Ascending aorta (tissue), 2 donors: ENCODE measurements at regions of chr2 and their contacts with region 1.

Region 1: GRCh38 chr2:100984892-100985379 is 17.2 kb upstream of the RPL31 start:
- DNase-seq: peak in 1 of 2 donors; percentile 84
- H3K4me3 ChIP-seq: no peak overlapping the region
- H3K27ac ChIP-seq: peak overlapping the region; percentile 51 to 74
- H3K4me1 ChIP-seq: peaks cover 5 to 12% of the 10 kb centered on the region in 2 donors
- H3K27me3 ChIP-seq: no peaks in the 10 kb centered on the region
- CTCF ChIP-seq: peak; percentile 88 to 95 (median 90)

Region 2: GRCh38 chr2:100606726-100607343 is 378.1 kb before region 1 on chr2:
- intact Hi-C with region 1: loop called (anchors 1 kb)
- DNase-seq: peak in 1 of 2 donors; percentile 66
- H3K4me3 ChIP-seq: no peak overlapping the region
- H3K27ac ChIP-seq: no peak overlapping the region
- H3K4me1 ChIP-seq: peaks cover 5 to 10% of the 10 kb centered on the region in 2 donors
- H3K27me3 ChIP-seq: no peaks in the 10 kb centered on the region
- CTCF ChIP-seq: peak; percentile 58 to 79 (median 73)

Region 3: GRCh38 chr2:100730346-100730745 is 254.6 kb before region 1 on chr2:
- intact Hi-C with region 1: loop called (anchors 1 kb)
- DNase-seq: no peak
- H3K4me3 ChIP-seq: no peak overlapping the region
- H3K27ac ChIP-seq: no peak overlapping the region
- H3K4me1 ChIP-seq: no peaks in the 10 kb centered on the region
- H3K27me3 ChIP-seq: no peaks in the 10 kb centered on the region
- CTCF ChIP-seq: peak; percentile 43 to 63 (median 59)

Region 4: GRCh38 chr2:100882645-100883613 is 102.0 kb before region 1 on chr2:
- intact Hi-C with region 1: no loop called
- DNase-seq: no peak
- H3K4me3 ChIP-seq: no peak overlapping the region
- H3K27ac ChIP-seq: no peak overlapping the region
- H3K4me1 ChIP-seq: peaks cover 0 to 5% of the 10 kb centered on the region in 2 donors
- H3K27me3 ChIP-seq: no peaks in the 10 kb centered on the region
- CTCF ChIP-seq: no peak

Region 5: GRCh38 chr2:100957996-100958653 is 26.8 kb before region 1 on chr2:
- intact Hi-C with region 1: loop called (anchors 2 kb)
- DNase-seq: peak in 1 of 2 donors; percentile 84
- H3K4me3 ChIP-seq: peak overlapping the region; percentile 18 to 21
- H3K27ac ChIP-seq: peak overlapping the region; percentile 49 to 63
- H3K4me1 ChIP-seq: peaks cover 0 to 8% of the 10 kb centered on the region in 2 donors
- H3K27me3 ChIP-seq: no peaks in the 10 kb centered on the region
- CTCF ChIP-seq: no peak

Region 6: DNA sequence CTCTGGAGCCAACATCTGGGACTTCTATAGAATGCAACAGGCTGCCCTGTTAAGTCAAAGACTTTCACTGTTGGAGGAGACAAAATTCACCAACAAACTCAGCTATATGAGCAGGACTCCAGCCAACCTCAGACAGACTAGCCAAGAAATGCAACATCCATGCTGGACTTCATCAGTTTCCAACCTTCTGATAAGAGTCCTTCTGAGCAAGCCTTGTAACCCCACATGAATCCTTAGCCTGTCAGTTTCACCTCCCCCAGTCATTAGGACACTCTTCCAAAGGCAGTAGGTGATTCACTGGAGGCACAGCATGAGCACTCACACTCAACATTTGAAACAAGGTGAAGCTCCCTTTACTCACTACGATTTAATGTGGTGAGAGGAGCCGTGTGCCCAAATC is 160.5 kb after region 1 on chr2:
- intact Hi-C with region 1: no loop called
- DNase-seq: no peak
- H3K4me3 ChIP-seq: no peak overlapping the region
- H3K27ac ChIP-seq: no peak overlapping the region
- H3K4me1 ChIP-seq: peaks cover 0 to 6% of the 10 kb centered on the region in 2 donors
- H3K27me3 ChIP-seq: no peaks in the 10 kb centered on the region
- CTCF ChIP-seq: no peak

Region 7: GRCh38 chr2:101486258-101486701 is 501.3 kb after region 1 on chr2:
- intact Hi-C with region 1: no loop called
- DNase-seq: no peak
- H3K4me3 ChIP-seq: no peak overlapping the region
- H3K27ac ChIP-seq: no peak overlapping the region
- H3K4me1 ChIP-seq: no peaks in the 10 kb centered on the region
- H3K27me3 ChIP-seq: no peaks in the 10 kb centered on the region
- CTCF ChIP-seq: no peak